ENCODE measurements at regions of chr7 and their contacts with region 1.

Region 1: DNA sequence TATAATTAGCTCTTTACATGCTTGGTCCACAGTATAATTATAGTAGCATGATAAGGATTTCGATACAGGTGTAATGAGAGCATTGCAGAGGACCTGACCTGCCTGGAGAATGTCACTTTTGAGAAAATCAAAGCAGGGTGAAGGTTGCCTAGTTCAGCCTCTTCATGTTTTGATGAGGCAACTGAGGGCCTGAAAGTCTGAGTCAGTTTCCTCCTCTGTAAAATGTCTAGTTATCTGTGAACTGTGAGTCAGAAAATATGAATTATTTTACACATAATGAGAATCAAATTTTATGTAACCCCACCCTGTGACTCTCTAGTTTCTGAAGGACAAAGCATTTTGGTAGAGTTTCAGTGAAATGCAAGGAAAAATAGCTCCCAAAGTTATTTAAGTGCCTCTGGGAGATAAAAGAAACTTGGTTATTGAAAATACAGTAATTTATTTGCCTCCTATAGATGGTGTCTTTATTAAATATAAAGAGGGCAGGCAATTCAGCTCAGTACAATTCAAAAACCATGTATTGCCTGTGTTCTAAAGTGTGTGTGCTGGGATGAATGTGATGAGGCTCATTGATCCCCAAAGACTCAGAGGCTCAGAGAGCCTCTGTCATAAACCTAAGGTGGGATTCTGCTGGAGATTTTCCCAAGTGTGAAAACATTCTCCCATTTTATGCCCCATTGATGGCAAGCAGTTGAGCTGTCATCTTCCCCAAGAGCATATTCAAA is 37.3 kb upstream of the SAMD9L start:
- DNase-seq: peak; percentile 23
- ATAC-seq: no peak
- H3K4me3 ChIP-seq: no peak overlapping the region
- H3K27ac ChIP-seq: no peak overlapping the region
- H3K4me1 ChIP-seq: no peaks in the 10 kb centered on the region
- H3K27me3 ChIP-seq: peaks cover 16% of the 10 kb centered on the region
- CTCF ChIP-seq: no peak
- POLR2A ChIP-seq: no peak
- RAD21 ChIP-seq: no peak

Region 2: GRCh38 chr7:92178927-92179924 is 1006.2 kb before region 1 on chr7 and contains the start of gene LRRD1:
- CTCF ChIA-PET with region 1: no interaction called
- POLR2A ChIA-PET with region 1: no interaction called
- dilution Hi-C with region 1: no loop called
- in situ Hi-C with region 1: no loop called
- intact Hi-C with region 1: loop called (anchors 5 kb)
- DNase-seq: peak; percentile 73
- ATAC-seq: peak; percentile 99
- H3K4me3 ChIP-seq: peak within 1 kb of the TSS; percentile 35
- H3K27ac ChIP-seq: 0 out of 2 replicates have a peak within 1 kb of the TSS, but pooled peaks have one; percentile 3
- H3K4me1 ChIP-seq: peaks cover 4% of the 10 kb centered on the region; the same call in 1 of the 2 replicates
- H3K27me3 ChIP-seq: no peaks in the 10 kb centered on the region
- CTCF ChIP-seq: peak; percentile 90
- POLR2A ChIP-seq: no peak
- RAD21 ChIP-seq: peak; percentile 54
- total RNA-seq, gene LRRD1: under 0.01 TPM in 2 replicates

Region 3: GRCh38 chr7:92691578-92691977 is 493.9 kb before region 1 on chr7:
- CTCF ChIA-PET with region 1: no interaction called
- POLR2A ChIA-PET with region 1: no interaction called
- dilution Hi-C with region 1: no loop called
- in situ Hi-C with region 1: no loop called
- intact Hi-C with region 1: no loop called
- DNase-seq: peak; percentile 76
- ATAC-seq: peak; percentile 30; the same call in 1 of the 2 replicates
- H3K4me3 ChIP-seq: no peak overlapping the region
- H3K27ac ChIP-seq: peak overlapping the region; percentile 36
- H3K4me1 ChIP-seq: peaks cover 2% of the 10 kb centered on the region; the same call in 1 of the 2 replicates
- H3K27me3 ChIP-seq: no peaks in the 10 kb centered on the region
- CTCF ChIP-seq: peak; percentile 61
- POLR2A ChIP-seq: no peak
- RAD21 ChIP-seq: peak; percentile 65

Region 4: GRCh38 chr7:93117852-93118530 is 67.5 kb before region 1 on chr7 and contains the start of gene SAMD9:
- CTCF ChIA-PET with region 1: no interaction called
- POLR2A ChIA-PET with region 1: no interaction called
- dilution Hi-C with region 1: no loop called
- in situ Hi-C with region 1: no loop called
- intact Hi-C with region 1: no loop called
- DNase-seq: peak; percentile 77
- ATAC-seq: peak; percentile 92
- H3K4me3 ChIP-seq: peak within 1 kb of the TSS; percentile 68
- H3K27ac ChIP-seq: peak within 1 kb of the TSS; percentile 22; the same call in 1 of the 2 replicates
- H3K4me1 ChIP-seq: peaks cover 7% of the 10 kb centered on the region
- H3K27me3 ChIP-seq: no peaks in the 10 kb centered on the region
- CTCF ChIP-seq: no peak
- POLR2A ChIP-seq: no peak
- RAD21 ChIP-seq: no peak
- total RNA-seq, gene SAMD9: 9.5 and 15.6 TPM in 2 replicates

Region 5: DNA sequence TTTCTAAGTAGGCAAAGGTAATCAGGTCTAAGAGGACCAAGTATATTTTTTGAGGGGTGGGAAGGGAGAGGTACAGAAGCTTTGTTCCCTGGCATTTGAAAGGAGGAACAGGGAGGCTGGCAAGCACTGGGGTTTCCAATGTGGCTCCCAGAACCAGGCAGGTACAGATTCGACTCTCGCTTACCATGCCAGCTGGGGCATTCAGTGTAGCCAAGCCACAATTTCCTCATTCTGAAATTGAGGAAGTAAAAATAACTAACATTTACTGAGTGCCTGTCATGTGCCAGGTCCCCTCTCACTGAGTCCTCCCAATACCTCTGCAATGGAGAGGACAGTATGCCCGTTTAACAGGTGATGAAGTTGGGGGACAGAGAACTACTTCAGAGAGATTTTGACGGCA is 864.6 kb after region 1 on chr7:
- CTCF ChIA-PET with region 1: no interaction called
- POLR2A ChIA-PET with region 1: no interaction called
- dilution Hi-C with region 1: no loop called
- in situ Hi-C with region 1: no loop called
- intact Hi-C with region 1: no loop called
- DNase-seq: no peak
- ATAC-seq: no peak
- H3K4me3 ChIP-seq: no peak overlapping the region
- H3K27ac ChIP-seq: no peak overlapping the region
- H3K4me1 ChIP-seq: no peaks in the 10 kb centered on the region
- H3K27me3 ChIP-seq: no peaks in the 10 kb centered on the region
- CTCF ChIP-seq: no peak
- POLR2A ChIP-seq: no peak
- RAD21 ChIP-seq: no peak

Measured in IMR-90 (cell line).